ENCODE measurements at regions of chr6 and their contacts with region 1.

Region 1: DNA sequence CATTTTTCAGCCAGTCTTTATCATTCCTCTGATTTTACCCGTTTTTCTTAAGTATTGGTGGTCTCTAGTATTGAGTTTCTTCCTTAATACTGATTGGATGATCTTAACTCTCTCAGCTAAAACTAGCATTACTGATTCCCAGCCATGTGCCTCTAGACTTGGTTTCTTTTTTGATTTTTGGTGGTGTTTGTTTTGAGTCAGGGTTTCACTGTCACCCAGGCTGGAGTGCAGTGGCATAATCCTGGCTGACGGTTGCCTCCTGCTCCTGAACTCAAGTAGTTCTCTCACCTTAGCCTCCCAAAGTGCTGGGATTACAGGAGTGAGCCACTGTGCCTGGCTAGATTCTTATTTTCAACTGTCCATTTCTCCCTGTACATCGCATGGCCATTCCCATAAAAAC is 24.9 kb downstream of the DPPA5 start:
- DNase-seq: no peak
- H3K4me3 ChIP-seq: no peak overlapping the region
- H3K27ac ChIP-seq: no peak overlapping the region
- H3K4me1 ChIP-seq: no peaks in the 10 kb centered on the region
- H3K27me3 ChIP-seq: peaks cover 6 to 14% of the 10 kb centered on the region in 2 experiments
- CTCF ChIP-seq: no peak
- POLR2A ChIP-seq: no peak

Region 2: DNA sequence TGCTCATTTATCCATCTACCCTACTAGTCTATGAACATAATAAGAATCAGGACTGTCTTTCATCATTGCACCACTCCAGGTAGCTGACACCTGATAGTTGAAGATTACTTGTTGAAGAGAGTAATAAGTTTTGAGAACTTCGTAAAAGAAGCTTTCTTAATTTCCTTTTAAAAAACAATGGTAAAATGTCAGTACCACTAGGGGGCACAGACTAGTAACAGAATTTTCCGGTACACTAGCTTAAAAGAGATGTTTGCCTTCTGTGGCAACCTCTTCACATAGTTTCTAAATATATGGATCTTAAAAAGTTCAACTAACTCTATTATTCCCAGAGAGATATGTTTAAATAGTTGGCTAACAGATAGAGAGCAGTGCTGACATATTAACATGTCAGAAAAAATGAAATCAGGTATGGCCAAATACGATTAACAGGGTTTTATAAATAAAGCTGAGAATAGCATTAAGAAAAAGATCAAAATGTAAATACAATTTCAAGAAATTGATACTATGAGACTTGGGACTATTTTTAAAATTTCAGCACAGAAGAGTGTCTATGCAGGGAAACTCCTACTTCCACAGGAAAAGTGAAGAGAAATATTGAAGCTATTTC is 712.7 kb before region 1 on chr6:
- CTCF ChIA-PET with region 1: interaction called, 40 read pairs
- POLR2A ChIA-PET with region 1: no interaction called
- dilution Hi-C with region 1: no loop called
- intact Hi-C with region 1: loop called (anchors 2 kb)
- DNase-seq: peak; percentile 39
- H3K4me3 ChIP-seq: no peak overlapping the region
- H3K27ac ChIP-seq: no peak overlapping the region
- H3K4me1 ChIP-seq: peaks cover 2% of the 10 kb centered on the region
- H3K27me3 ChIP-seq: peaks cover 24 to 38% of the 10 kb centered on the region in 2 experiments
- CTCF ChIP-seq: peak; percentile 24 to 31
- POLR2A ChIP-seq: no peak

Region 3: GRCh38 chr6:73180763-73181619 is 148.2 kb before region 1 on chr6:
- CTCF ChIA-PET with region 1: interaction called, 8 read pairs
- POLR2A ChIA-PET with region 1: no interaction called
- dilution Hi-C with region 1: no loop called
- intact Hi-C with region 1: loop called (anchors 1 kb)
- DNase-seq: peak; percentile 55
- H3K4me3 ChIP-seq: no peak overlapping the region
- H3K27ac ChIP-seq: no peak overlapping the region
- H3K4me1 ChIP-seq: no peaks in the 10 kb centered on the region
- H3K27me3 ChIP-seq: peaks cover 11 to 19% of the 10 kb centered on the region in 2 experiments
- CTCF ChIP-seq: peak; percentile 49 to 65
- POLR2A ChIP-seq: no peak

Region 4: GRCh38 chr6:73285674-73286283 is 43.4 kb before region 1 on chr6:
- CTCF ChIA-PET with region 1: interaction called, 432 read pairs
- POLR2A ChIA-PET with region 1: interaction called, 3 read pairs
- dilution Hi-C with region 1: no loop called
- intact Hi-C with region 1: loop called (anchors 1 kb)
- DNase-seq: peak; percentile 60
- H3K4me3 ChIP-seq: no peak overlapping the region
- H3K27ac ChIP-seq: no peak overlapping the region
- H3K4me1 ChIP-seq: peaks cover 16% of the 10 kb centered on the region
- H3K27me3 ChIP-seq: no peaks in the 10 kb centered on the region
- CTCF ChIP-seq: peak; percentile 19 to 34
- POLR2A ChIP-seq: no peak

Region 5: DNA sequence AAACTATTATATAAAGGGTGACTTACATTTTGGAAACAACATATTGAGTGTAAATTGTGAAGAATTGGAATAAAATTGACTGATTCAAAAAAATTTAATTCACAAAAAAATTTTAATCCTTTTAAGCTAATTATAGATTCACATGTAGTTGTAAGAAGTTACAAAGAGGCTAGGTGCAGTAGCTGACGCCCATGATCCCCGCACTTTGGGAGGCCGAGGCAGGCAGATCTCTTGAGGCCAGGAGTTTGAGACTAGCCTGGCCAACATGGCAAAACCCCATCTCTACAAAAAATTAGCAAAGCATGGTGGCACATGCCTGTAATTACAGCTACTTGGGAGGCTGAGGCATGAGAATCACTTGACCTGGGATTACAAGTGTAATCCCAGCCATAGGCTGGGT is 35.9 kb before region 1 on chr6:
- CTCF ChIA-PET with region 1: interaction called, 432 read pairs
- POLR2A ChIA-PET with region 1: no interaction called
- dilution Hi-C with region 1: no loop called
- intact Hi-C with region 1: no loop called
- DNase-seq: no peak
- H3K4me3 ChIP-seq: no peak overlapping the region
- H3K27ac ChIP-seq: no peak overlapping the region
- H3K4me1 ChIP-seq: peaks cover 8% of the 10 kb centered on the region
- H3K27me3 ChIP-seq: no peaks in the 10 kb centered on the region
- CTCF ChIP-seq: no peak
- POLR2A ChIP-seq: no peak

Region 6: DNA sequence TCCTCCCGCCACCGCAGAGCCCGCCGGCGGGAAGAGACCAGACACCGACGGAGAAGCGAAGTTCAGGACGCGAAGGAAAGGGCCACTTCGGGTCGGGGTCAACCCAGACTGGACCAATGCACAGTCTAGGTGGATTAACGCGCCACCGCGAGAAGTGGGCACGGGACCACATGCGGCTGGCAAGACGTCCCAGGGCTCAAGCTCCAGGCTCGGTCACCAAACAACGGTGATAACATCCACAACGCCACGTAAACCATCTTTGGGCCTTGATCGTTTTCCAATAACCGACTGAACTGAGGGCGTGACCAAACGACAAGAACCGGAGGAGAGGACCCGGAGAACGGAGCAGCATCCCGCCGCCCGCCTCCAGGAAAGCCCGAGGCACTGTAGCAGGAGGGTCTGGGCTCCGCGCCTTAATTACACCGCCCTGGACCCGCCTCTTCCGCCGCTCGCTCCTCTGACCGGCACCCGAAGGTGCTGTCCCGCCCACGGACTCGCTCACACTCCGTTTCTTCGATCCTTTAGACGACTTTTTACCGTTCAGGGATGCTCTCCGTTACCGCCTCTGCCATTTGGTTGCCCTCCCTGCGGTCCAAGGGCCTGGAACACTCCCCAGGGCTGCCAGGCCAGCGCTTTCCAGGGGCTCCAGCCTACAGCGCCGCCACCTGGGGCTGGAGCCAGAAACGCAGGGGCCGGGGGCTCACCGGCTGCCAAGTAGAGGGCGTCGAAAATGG is 19.3 kb before region 1 on chr6:
- CTCF ChIA-PET with region 1: interaction called, 12 read pairs
- POLR2A ChIA-PET with region 1: interaction called, 3 read pairs
- dilution Hi-C with region 1: no loop called
- intact Hi-C with region 1: no loop called
- DNase-seq: peak; percentile 68
- H3K4me3 ChIP-seq: peak overlapping the region; percentile 60 to 83 (median 71)
- H3K27ac ChIP-seq: peak overlapping the region; percentile 19
- H3K4me1 ChIP-seq: peaks cover 12% of the 10 kb centered on the region
- H3K27me3 ChIP-seq: peaks cover 3 to 4% of the 10 kb centered on the region in 2 experiments
- CTCF ChIP-seq: peak; percentile 54 to 69
- POLR2A ChIP-seq: peak; percentile 86

Region 7: GRCh38 chr6:73349311-73349710 is 20.1 kb after region 1 on chr6:
- CTCF ChIA-PET with region 1: interaction called, 11 read pairs
- POLR2A ChIA-PET with region 1: no interaction called
- dilution Hi-C with region 1: no loop called
- intact Hi-C with region 1: no loop called
- DNase-seq: no peak
- H3K4me3 ChIP-seq: no peak overlapping the region
- H3K27ac ChIP-seq: no peak overlapping the region
- H3K4me1 ChIP-seq: no peaks in the 10 kb centered on the region
- H3K27me3 ChIP-seq: peaks cover 26 to 28% of the 10 kb centered on the region in 2 experiments
- CTCF ChIP-seq: no peak
- POLR2A ChIP-seq: no peak